Colonic mucosa (tissue), 4 donors: ENCODE measurements at regions of chr7 and their contacts with region 1.

Region 1: GRCh38 chr7:8226501-8226900 is 35.5 kb downstream of the ICA1 start:
- DNase-seq: no peak
- H3K4me3 ChIP-seq: no peak overlapping the region
- H3K27ac ChIP-seq: no peak overlapping the region
- H3K4me1 ChIP-seq: no peaks in the 10 kb centered on the region
- H3K27me3 ChIP-seq: no peaks in the 10 kb centered on the region
- CTCF ChIP-seq: no peak

Region 2: GRCh38 chr7:7672545-7673239 is 553.8 kb before region 1 on chr7:
- intact Hi-C with region 1: loop called (anchors 10 kb)
- DNase-seq: no peak
- H3K4me3 ChIP-seq: no peak overlapping the region
- H3K27ac ChIP-seq: no peak overlapping the region
- H3K4me1 ChIP-seq: no peaks in the 10 kb centered on the region
- H3K27me3 ChIP-seq: no peaks in the 10 kb centered on the region
- CTCF ChIP-seq: no peak

Region 3: GRCh38 chr7:8092140-8092539 is 134.4 kb before region 1 on chr7:
- intact Hi-C with region 1: no loop called
- DNase-seq: no peak
- H3K4me3 ChIP-seq: no peak overlapping the region
- H3K27ac ChIP-seq: no peak overlapping the region
- H3K4me1 ChIP-seq: no peaks in the 10 kb centered on the region
- H3K27me3 ChIP-seq: no peaks in the 10 kb centered on the region
- CTCF ChIP-seq: no peak

Region 4: DNA sequence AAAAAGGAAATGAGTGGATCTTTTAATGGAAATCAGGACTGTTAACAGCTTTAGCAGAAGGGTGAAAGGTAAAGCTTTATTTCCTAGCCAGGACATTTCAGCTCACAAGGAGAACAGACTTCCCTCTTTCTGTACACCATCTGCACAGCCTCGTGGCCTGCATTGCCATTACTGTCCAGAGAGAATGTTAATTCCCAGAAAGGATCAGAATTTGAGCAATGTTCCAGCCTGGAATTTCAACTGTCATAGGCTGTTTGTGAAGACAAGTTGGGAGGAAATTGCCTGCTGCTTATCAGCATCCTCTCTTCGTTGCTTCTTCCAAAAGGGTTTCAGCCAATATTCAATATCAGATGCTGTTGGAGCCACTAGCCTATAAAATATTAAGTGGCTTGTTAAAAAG is 228.9 kb after region 1 on chr7:
- intact Hi-C with region 1: no loop called
- DNase-seq: no peak
- H3K4me3 ChIP-seq: no peak overlapping the region
- H3K27ac ChIP-seq: no peak overlapping the region
- H3K4me1 ChIP-seq: no peaks in the 10 kb centered on the region
- H3K27me3 ChIP-seq: no peaks in the 10 kb centered on the region
- CTCF ChIP-seq: no peak

Region 5: DNA sequence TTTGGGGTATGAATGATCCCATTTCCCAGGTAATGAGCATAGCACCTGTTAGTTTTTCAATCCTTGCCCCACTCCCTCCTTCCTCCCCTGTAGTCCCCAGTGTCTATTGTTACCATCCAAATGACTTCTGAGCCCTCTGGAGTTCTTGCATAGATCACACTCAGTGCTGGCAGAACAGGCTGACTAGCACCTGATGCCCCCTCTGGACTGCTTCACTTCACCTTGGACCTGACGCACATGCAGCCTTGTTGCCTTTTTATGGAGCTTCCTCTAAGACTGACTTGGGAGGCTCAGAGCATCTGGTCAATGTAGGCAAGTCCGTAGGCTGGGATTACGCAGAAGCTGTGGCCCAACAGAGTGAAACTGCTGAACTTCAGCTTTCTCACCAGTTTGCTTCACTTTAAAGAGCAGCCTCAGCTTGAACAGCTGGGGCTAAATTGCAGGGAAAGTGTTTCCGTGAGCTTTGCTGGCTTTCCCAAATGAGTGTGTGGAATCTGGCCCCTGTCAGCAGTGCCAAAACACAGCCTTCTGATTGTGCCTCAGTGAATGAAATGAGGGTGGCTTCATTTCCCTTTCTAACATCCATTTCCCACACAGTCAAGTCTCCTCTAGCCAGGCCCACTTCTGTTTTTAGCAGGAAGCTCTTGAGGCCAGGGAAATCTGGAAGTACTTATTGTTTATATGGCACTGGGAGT is 255.4 kb after region 1 on chr7:
- intact Hi-C with region 1: no loop called
- DNase-seq: no peak
- H3K4me3 ChIP-seq: no peak overlapping the region
- H3K27ac ChIP-seq: no peak overlapping the region
- H3K4me1 ChIP-seq: no peaks in the 10 kb centered on the region
- H3K27me3 ChIP-seq: no peaks in the 10 kb centered on the region
- CTCF ChIP-seq: no peak